ENCODE measurements at regions of chr3 and their contacts with region 1.

Region 1: GRCh38 chr3:59052803-59053411 is 3.1 kb upstream of the CFAP20DC start:
- DNase-seq: peak; percentile 54
- ATAC-seq: no peak
- H3K4me3 ChIP-seq: no peak overlapping the region
- H3K4me3 Mint-ChIP-seq: no peak overlapping the region
- H3K27ac ChIP-seq: no peak overlapping the region
- H3K27ac Mint-ChIP-seq: no peak overlapping the region
- H3K4me1 ChIP-seq: peaks cover 3 to 14% of the 10 kb centered on the region in 2 donors
- H3K4me1 Mint-ChIP-seq: peaks cover 7% of the 10 kb centered on the region
- H3K27me3 ChIP-seq: no peaks in the 10 kb centered on the region
- H3K27me3 Mint-ChIP-seq: no peaks in the 10 kb centered on the region
- CTCF ChIP-seq: peak; percentile 70

Region 2: DNA sequence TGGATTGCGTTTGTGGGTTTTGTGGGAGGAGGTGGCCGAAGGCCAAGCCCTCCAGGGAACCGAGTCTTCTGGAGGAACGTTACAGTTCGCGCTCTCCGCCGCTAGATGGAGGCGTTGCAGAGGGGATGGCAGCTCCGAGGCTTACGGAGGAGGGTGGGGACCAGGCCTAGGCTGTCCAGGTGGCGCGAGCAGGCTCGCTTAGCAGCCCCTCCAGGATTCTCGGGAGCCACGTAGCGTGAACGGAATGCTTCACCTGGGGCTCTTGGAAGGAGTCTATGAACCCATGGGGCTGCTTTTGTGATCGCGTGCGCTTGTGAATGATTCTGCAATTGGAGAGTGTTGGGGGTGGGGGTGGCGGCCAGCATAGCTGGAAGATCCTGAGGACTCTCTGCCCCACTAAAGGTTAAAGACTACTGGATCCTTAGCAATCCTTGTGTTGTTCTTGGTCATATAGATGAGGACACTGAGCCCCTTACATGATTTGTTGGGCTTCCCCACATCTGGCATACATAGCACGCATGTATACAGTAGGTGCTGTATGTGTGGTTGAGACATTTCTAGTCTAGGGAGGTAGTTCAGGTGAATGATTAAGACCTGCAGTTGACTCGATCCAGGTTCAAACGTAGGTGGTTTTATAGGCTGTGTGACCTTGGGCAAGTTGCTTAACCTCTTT is 412.1 kb before region 1 on chr3:
- CTCF ChIA-PET with region 1: interaction called, 39 read pairs
- POLR2A ChIA-PET with region 1: no interaction called
- intact Hi-C with region 1: no loop called
- DNase-seq: peak; percentile 65
- ATAC-seq: peak; percentile 82
- H3K4me3 ChIP-seq: no peak overlapping the region
- H3K4me3 Mint-ChIP-seq: no peak overlapping the region
- H3K27ac ChIP-seq: no peak overlapping the region
- H3K27ac Mint-ChIP-seq: peak overlapping the region; percentile 20
- H3K4me1 ChIP-seq: peaks cover 0 to 5% of the 10 kb centered on the region in 2 donors
- H3K4me1 Mint-ChIP-seq: peaks cover 10% of the 10 kb centered on the region
- H3K27me3 ChIP-seq: no peaks in the 10 kb centered on the region
- H3K27me3 Mint-ChIP-seq: peaks cover 8% of the 10 kb centered on the region
- CTCF ChIP-seq: peak; percentile 82

Region 3: DNA sequence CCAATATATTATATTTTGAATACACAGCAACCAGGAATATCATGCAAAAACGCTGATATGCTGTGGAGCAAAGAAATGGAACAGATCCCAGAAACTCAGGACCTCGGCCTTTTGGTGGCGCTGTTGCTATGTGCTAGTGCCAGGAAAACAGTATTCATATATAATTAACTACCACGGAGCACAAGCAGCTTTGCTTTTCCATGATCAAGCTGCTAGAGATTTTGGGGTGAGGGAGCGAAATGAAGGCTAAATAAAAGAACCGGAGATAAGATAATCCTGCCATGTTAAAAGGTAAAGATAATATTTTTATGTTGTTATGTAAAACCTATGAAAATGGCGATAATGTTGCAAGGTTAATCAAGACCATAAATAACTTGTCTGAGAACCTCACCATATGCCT is 228.6 kb before region 1 on chr3:
- CTCF ChIA-PET with region 1: interaction called, 44 read pairs
- POLR2A ChIA-PET with region 1: no interaction called
- intact Hi-C with region 1: loop called (anchors 1 kb)
- DNase-seq: peak; percentile 31
- ATAC-seq: no peak
- H3K4me3 ChIP-seq: no peak overlapping the region
- H3K4me3 Mint-ChIP-seq: no peak overlapping the region
- H3K27ac ChIP-seq: no peak overlapping the region
- H3K27ac Mint-ChIP-seq: no peak overlapping the region
- H3K4me1 ChIP-seq: no peaks in the 10 kb centered on the region
- H3K4me1 Mint-ChIP-seq: peaks cover 5% of the 10 kb centered on the region
- H3K27me3 ChIP-seq: no peaks in the 10 kb centered on the region
- H3K27me3 Mint-ChIP-seq: no peaks in the 10 kb centered on the region
- CTCF ChIP-seq: peak; percentile 59

Region 4: GRCh38 chr3:58994746-58995330 is 58.1 kb before region 1 on chr3:
- CTCF ChIA-PET with region 1: interaction called, 16 read pairs
- POLR2A ChIA-PET with region 1: no interaction called
- intact Hi-C with region 1: loop called (anchors 2 kb)
- DNase-seq: peak; percentile 49
- ATAC-seq: no peak
- H3K4me3 ChIP-seq: no peak overlapping the region
- H3K4me3 Mint-ChIP-seq: no peak overlapping the region
- H3K27ac ChIP-seq: no peak overlapping the region
- H3K27ac Mint-ChIP-seq: no peak overlapping the region
- H3K4me1 ChIP-seq: no peaks in the 10 kb centered on the region
- H3K4me1 Mint-ChIP-seq: peaks cover 6% of the 10 kb centered on the region
- H3K27me3 ChIP-seq: no peaks in the 10 kb centered on the region
- H3K27me3 Mint-ChIP-seq: no peaks in the 10 kb centered on the region
- CTCF ChIP-seq: peak; percentile 60